ENCODE measurements at regions of chr1 and their contacts with region 1.

Region 1: GRCh38 chr1:179025125-179025974 is at the start of gene FAM20B:
- DNase-seq: peak; percentile 80 to 89 (median 86)
- ATAC-seq: peak; percentile 95
- H3K4me3 ChIP-seq: peak within 1 kb of the TSS; percentile 71
- H3K4me3 Mint-ChIP-seq: peak within 1 kb of the TSS; percentile 87 to 98 (median 91)
- H3K27ac ChIP-seq: peak within 1 kb of the TSS; percentile 84
- H3K27ac Mint-ChIP-seq: peak within 1 kb of the TSS; percentile 86 to 92 (median 89)
- H3K4me1 ChIP-seq: peaks cover 10 to 17% of the 10 kb centered on the region in 2 donors
- H3K4me1 Mint-ChIP-seq: peaks cover 35 to 60% (median 50%) of the 10 kb centered on the region in 7 donors
- H3K27me3 ChIP-seq: no peaks in the 10 kb centered on the region
- H3K27me3 Mint-ChIP-seq: peaks cover 0 to 31% (median 0%) of the 10 kb centered on the region in 5 donors
- total RNA-seq, gene FAM20B: 14.3 to 27.9 (median 25.2) TPM

Region 2: DNA sequence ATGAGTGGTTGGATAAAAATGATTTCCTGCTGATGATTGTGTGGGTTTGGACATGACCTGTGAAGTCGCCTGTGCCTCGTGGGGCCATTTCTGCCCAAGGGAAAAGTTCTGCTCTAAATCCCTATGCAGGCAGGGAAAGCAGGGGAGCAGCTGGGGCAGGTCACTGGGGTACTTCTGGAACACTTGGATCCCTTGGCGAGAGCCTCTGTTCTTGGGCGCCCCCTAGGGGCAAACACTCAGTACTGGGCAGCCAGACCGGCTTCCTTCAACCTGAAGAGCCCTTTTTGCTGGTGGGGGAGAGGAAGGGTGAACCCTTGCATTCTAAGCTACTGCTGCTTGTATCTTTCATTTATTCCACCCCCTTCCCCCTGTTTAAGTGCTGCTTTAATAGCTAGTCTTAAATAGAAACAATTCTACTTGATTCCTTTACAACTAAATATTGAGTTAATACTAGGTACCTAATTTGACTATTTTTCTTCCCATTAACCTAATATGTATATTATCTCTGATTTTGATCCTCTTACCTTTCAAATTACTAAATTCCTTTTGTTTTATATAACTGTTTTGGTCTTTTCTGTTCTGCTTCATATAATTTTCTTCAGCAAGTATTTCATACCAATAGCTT is 523.5 kb before region 1 on chr1:
- CTCF ChIA-PET with region 1: no interaction called
- POLR2A ChIA-PET with region 1: no interaction called
- intact Hi-C with region 1: no loop called
- DNase-seq: peak in 6 of 9 donors; percentile 4 to 62 (median 22)
- ATAC-seq: peak; percentile 76
- H3K4me3 ChIP-seq: no peak overlapping the region
- H3K4me3 Mint-ChIP-seq: no peak overlapping the region
- H3K27ac ChIP-seq: no peak overlapping the region
- H3K27ac Mint-ChIP-seq: no peak overlapping the region
- H3K4me1 ChIP-seq: no peaks in the 10 kb centered on the region
- H3K4me1 Mint-ChIP-seq: no peaks in the 10 kb centered on the region
- H3K27me3 ChIP-seq: no peaks in the 10 kb centered on the region
- H3K27me3 Mint-ChIP-seq: peaks cover 0 to 8% (median 4%) of the 10 kb centered on the region in 5 donors

Region 3: GRCh38 chr1:178542560-178543356 is 482.6 kb before region 1 on chr1:
- CTCF ChIA-PET with region 1: interaction called, 3 read pairs
- POLR2A ChIA-PET with region 1: no interaction called
- intact Hi-C with region 1: loop called in 1 of 2 experiments (anchors 1 kb)
- DNase-seq: peak; percentile 61 to 98 (median 87)
- ATAC-seq: peak; percentile 96
- H3K4me3 ChIP-seq: peak overlapping the region; percentile 99
- H3K4me3 Mint-ChIP-seq: peak overlapping the region; percentile 89 to 96 (median 92)
- H3K27ac ChIP-seq: peak overlapping the region; percentile 56
- H3K27ac Mint-ChIP-seq: peak overlapping the region; percentile 32 to 88 (median 83)
- H3K4me1 ChIP-seq: peaks cover 0 to 5% of the 10 kb centered on the region in 2 donors
- H3K4me1 Mint-ChIP-seq: peaks cover 0 to 15% (median 10%) of the 10 kb centered on the region in 7 donors
- H3K27me3 ChIP-seq: no peaks in the 10 kb centered on the region
- H3K27me3 Mint-ChIP-seq: no peaks in the 10 kb centered on the region

Region 4: DNA sequence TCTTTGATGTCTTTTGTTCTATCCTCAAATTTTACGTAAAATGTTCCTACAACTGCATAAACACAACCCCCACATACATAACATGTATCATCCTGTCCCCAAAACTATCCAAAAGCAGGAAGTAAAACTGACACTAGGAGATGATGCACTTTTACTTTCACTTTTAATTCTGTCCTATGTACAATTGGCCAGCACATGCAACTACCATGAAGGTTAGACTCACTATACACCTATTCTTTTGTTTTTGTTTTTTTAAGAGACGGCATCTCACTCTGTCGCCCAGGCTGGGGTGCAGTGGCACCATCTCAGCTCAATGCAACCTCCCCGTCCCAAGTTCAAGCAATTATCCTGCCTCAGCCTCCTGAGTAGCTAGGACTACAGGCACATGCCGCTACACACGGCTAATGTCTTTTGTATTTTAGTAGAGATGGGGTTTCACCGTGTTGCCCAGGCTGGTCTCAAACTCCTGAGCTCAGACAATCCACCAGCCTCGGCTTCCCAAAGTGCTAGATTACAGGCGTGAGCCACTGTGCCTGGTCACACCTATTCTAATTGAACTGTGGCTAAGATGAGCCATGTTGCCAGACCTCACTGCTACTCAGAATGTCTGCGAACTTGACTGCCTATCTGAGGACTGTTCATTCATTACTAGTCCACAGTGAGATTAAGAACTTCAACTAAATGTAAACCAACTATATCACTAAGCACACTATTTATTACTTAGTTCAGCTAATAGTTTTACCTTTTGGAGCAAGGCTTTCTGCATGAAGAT is 104.5 kb after region 1 on chr1:
- CTCF ChIA-PET with region 1: no interaction called
- POLR2A ChIA-PET with region 1: no interaction called
- intact Hi-C with region 1: loop called (anchors 1 to 2 kb)
- DNase-seq: peak in 8 of 9 donors; percentile 28 to 83 (median 72)
- ATAC-seq: peak; percentile 95
- H3K4me3 ChIP-seq: peak overlapping the region; percentile 38
- H3K4me3 Mint-ChIP-seq: peak overlapping the region; percentile 63 to 93 (median 80)
- H3K27ac ChIP-seq: peak overlapping the region; percentile 79
- H3K27ac Mint-ChIP-seq: peak overlapping the region; percentile 87 to 96 (median 94)
- H3K4me1 ChIP-seq: peaks cover 4 to 17% of the 10 kb centered on the region in 2 donors
- H3K4me1 Mint-ChIP-seq: peaks cover 3 to 33% (median 22%) of the 10 kb centered on the region in 7 donors
- H3K27me3 ChIP-seq: no peaks in the 10 kb centered on the region
- H3K27me3 Mint-ChIP-seq: no peaks in the 10 kb centered on the region

Region 5: GRCh38 chr1:179816196-179816960 is 791.0 kb after region 1 on chr1:
- CTCF ChIA-PET with region 1: no interaction called
- POLR2A ChIA-PET with region 1: no interaction called
- intact Hi-C with region 1: loop called in 1 of 2 experiments (anchors 1 kb)
- DNase-seq: no peak
- ATAC-seq: no peak
- H3K4me3 ChIP-seq: no peak overlapping the region
- H3K4me3 Mint-ChIP-seq: peak overlapping the region; percentile 34 to 98 (median 93)
- H3K27ac ChIP-seq: no peak overlapping the region
- H3K27ac Mint-ChIP-seq: peak overlapping the region in 7 of 9 donors; percentile 87 to 99 (median 95)
- H3K4me1 ChIP-seq: peaks cover 6 to 9% of the 10 kb centered on the region in 2 donors
- H3K4me1 Mint-ChIP-seq: peaks cover 10 to 25% (median 20%) of the 10 kb centered on the region in 7 donors
- H3K27me3 ChIP-seq: no peaks in the 10 kb centered on the region
- H3K27me3 Mint-ChIP-seq: peaks cover 0 to 15% (median 0%) of the 10 kb centered on the region in 5 donors

Region 6: GRCh38 chr1:180502360-180503273 is 1477.3 kb after region 1 on chr1 and contains the start of gene ACBD6:
- CTCF ChIA-PET with region 1: no interaction called
- POLR2A ChIA-PET with region 1: no interaction called
- intact Hi-C with region 1: loop called in 1 of 2 experiments (anchors 2 kb)
- DNase-seq: peak; percentile 80 to 92 (median 89)
- ATAC-seq: peak; percentile 95
- H3K4me3 ChIP-seq: peak within 1 kb of the TSS; percentile 85
- H3K4me3 Mint-ChIP-seq: peak within 1 kb of the TSS; percentile 89 to 100 (median 97)
- H3K27ac ChIP-seq: peak within 1 kb of the TSS; percentile 79
- H3K27ac Mint-ChIP-seq: peak within 1 kb of the TSS; percentile 91 to 99 (median 98)
- H3K4me1 ChIP-seq: peaks cover 10 to 18% of the 10 kb centered on the region in 2 donors
- H3K4me1 Mint-ChIP-seq: peaks cover 17 to 55% (median 38%) of the 10 kb centered on the region in 7 donors
- H3K27me3 ChIP-seq: no peaks in the 10 kb centered on the region
- H3K27me3 Mint-ChIP-seq: peaks cover 0 to 5% (median 0%) of the 10 kb centered on the region in 5 donors
- total RNA-seq, gene ACBD6: 44.2 to 75.7 (median 47.3) TPM

Measured in naive thymus-derived CD4-positive, alpha-beta T cell (primary cell).